Psoas muscle (tissue), 8 donors: ENCODE measurements at regions of chr4 and their contacts with region 1.

Region 1: GRCh38 chr4:39977489-39978377 is at the start of gene PDS5A:
- DNase-seq: peak; percentile 90 to 94
- ATAC-seq: peak; percentile 94
- H3K4me3 ChIP-seq: peak within 1 kb of the TSS; percentile 85
- H3K27ac ChIP-seq: peak within 1 kb of the TSS; percentile 84
- H3K4me1 ChIP-seq: peaks cover 18% of the 10 kb centered on the region
- H3K27me3 ChIP-seq: no peaks in the 10 kb centered on the region
- CTCF ChIP-seq: peak; percentile 75
- total RNA-seq, gene PDS5A: 23.2 to 34.0 (median 30.8) TPM

Region 2: GRCh38 chr4:39469429-39470077 is 508.2 kb before region 1 on chr4:
- intact Hi-C with region 1: loop called (anchors 2 to 10 kb)
- DNase-seq: no peak
- ATAC-seq: peak; percentile 60 to 88 (median 70)
- H3K4me3 ChIP-seq: no peak overlapping the region
- H3K27ac ChIP-seq: no peak overlapping the region
- H3K4me1 ChIP-seq: no peaks in the 10 kb centered on the region
- H3K27me3 ChIP-seq: no peaks in the 10 kb centered on the region
- CTCF ChIP-seq: peak; percentile 74

Region 3: DNA sequence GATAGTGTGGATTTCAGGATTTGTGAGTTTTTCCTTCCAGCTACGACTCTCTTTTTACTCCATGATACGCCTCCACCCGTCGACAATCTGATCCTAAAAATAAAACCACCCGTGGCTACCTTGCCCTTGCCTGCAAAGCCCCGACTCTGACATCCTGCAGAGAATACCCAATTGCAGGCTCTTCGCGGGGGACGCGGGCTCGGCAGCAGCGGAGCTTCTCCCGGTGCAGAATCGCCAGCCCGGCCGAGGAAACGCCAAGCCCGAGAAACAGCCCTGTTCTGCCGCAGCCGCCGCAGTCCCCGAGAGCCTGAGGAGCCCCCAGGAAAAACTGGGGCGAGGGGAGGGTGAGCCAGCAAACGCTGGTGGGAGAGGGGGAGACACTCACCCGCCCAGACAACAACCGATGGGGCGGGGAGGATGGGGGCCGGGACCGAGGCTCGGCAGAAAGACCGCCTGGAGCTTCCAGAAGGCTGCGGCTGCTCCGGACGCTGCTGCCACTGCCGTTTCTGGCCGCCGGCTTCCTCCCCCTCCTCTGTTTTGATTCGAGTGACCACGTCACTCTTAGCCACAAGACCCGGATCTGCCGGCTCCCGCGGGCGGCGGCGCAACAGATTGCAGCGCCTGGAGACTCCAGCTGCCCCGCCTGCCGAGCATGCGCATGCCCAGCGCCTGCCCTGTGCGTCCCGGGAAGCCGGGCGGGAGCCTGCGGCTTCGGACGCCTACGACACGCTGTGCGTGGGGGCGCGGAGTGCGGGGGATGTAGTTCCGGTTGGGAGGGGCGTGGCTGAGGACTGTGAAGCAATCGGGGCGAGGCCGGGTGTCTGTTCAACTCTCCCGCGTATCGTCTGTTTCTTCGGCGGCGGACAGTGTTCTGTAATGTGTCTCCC is 339.1 kb before region 1 on chr4 and contains the start of gene SMIM14:
- intact Hi-C with region 1: loop called in 1 of 2 experiments (anchors 5 kb)
- DNase-seq: peak; percentile 99 to 100
- ATAC-seq: peak; percentile 96 to 99 (median 98)
- H3K4me3 ChIP-seq: peak within 1 kb of the TSS; percentile 99
- H3K27ac ChIP-seq: peak within 1 kb of the TSS; percentile 100
- H3K4me1 ChIP-seq: peaks cover 32% of the 10 kb centered on the region
- H3K27me3 ChIP-seq: no peaks in the 10 kb centered on the region
- CTCF ChIP-seq: peak; percentile 12
- total RNA-seq, gene SMIM14: 4.2 to 7.7 (median 6.5) TPM

Region 4: DNA sequence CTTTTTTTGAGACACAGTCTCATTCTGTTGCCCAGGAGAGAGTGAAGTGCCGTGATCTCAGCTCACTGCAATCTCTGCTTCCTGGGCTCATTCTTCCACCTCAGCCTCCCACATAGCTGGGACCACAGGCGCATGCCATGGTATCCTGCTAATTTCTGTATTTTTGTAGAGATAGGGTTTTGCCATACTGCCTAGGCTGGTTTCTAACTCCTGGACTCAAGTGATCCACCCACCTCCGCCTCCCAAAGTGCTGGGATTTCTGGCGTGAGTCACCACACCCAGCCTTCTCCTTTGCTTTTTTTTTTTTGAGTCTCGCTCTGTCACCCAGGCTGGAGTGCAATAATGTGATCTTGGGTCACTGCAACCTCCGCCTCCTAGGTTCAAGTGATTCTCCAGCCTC is 94.1 kb before region 1 on chr4:
- intact Hi-C with region 1: loop called in 1 of 2 experiments (anchors 10 kb)
- DNase-seq: no peak
- ATAC-seq: no peak
- H3K4me3 ChIP-seq: no peak overlapping the region
- H3K27ac ChIP-seq: no peak overlapping the region
- H3K4me1 ChIP-seq: no peaks in the 10 kb centered on the region
- H3K27me3 ChIP-seq: no peaks in the 10 kb centered on the region
- CTCF ChIP-seq: no peak

Region 5: GRCh38 chr4:40056716-40057585 is 79.2 kb after region 1 on chr4 and contains the start of gene N4BP2:
- intact Hi-C with region 1: loop called in 1 of 2 experiments (anchors 5 kb)
- DNase-seq: peak; percentile 82 to 90
- ATAC-seq: peak; percentile 81 to 87 (median 84)
- H3K4me3 ChIP-seq: peak within 1 kb of the TSS; percentile 86
- H3K27ac ChIP-seq: peak within 1 kb of the TSS; percentile 98
- H3K4me1 ChIP-seq: peaks cover 15% of the 10 kb centered on the region
- H3K27me3 ChIP-seq: no peaks in the 10 kb centered on the region
- CTCF ChIP-seq: peak; percentile 72
- total RNA-seq, gene N4BP2: 2.7 to 6.8 (median 3.2) TPM

Region 6: DNA sequence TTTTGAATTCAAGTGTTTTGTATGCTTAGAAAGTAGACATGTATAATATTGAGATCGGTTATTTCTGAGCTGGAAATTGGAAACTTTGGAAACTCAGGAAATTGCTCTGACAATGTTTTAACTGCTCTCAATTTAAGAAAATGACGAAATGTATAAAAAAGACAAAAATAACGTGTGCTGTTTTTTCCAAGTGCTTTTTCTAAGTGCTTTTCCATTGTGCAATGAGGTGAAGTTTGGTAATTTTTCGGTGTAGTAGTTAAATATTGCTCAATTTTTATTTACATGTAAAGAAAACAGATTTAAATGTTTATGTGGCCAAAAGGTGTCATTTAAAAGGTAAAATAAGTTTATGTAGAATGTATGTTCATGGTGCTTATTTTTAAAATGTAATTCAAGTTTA is 179.7 kb after region 1 on chr4:
- intact Hi-C with region 1: no loop called
- DNase-seq: no peak
- ATAC-seq: no peak
- H3K4me3 ChIP-seq: no peak overlapping the region
- H3K27ac ChIP-seq: no peak overlapping the region
- H3K4me1 ChIP-seq: no peaks in the 10 kb centered on the region
- H3K27me3 ChIP-seq: no peaks in the 10 kb centered on the region
- CTCF ChIP-seq: no peak